Thyroid gland (tissue), 4 donors: ENCODE measurements at regions of chr19 and their contacts with region 1.

Region 1: DNA sequence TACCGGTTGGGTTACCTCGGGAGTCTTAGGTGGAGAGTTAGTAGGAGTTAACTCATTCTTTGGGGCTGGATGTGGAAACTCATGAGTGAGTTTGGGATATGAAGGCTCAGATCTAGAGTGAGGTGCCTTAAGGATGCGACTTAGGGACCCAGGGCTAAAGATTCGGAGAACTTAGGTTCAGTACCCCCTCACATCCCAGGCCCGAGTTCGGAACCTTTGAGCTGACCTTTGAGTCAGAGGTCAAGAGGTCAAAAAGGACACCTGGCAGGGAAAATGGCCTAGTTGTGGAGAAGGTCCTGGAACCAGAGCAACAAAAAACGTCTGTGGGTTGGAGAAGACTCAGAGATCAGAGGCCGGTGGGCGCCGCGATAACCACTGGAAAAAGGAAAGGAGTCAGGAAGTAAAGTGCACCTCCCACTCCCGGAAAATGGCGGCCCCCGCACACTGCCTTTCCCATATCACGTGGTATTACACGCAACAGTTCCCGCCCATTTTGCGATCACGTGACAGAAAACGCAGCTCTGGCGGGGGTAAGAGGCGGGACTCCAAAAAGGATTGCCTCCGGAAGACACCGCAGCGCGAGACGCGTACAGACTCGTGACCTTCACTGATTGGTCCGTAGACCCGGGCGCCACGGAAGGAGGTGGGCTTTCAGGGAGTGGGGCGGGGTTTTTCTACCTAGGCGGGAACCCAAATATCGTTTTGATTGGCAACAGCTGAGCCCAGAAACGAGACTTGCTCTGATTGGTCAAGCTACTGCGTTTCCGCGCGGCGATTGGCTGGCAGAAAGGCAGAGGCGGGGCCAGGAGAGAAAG is at the start of gene ACTMAP:
- DNase-seq: peak; percentile 99 to 100
- H3K4me3 ChIP-seq: peak within 1 kb of the TSS; percentile 45 to 62 (median 46)
- H3K27ac ChIP-seq: peak within 1 kb of the TSS; percentile 78 to 95 (median 86)
- H3K4me1 ChIP-seq: peaks cover 42 to 45% of the 10 kb centered on the region in 2 donors
- H3K27me3 ChIP-seq: no peaks in the 10 kb centered on the region
- CTCF ChIP-seq: peak in 2 of 6 experiments; percentile 13 to 20
- POLR2A ChIP-seq: peak; percentile 57 to 87
- total RNA-seq, gene ACTMAP: 3.3 to 8.5 (median 4.5) TPM

Region 2: DNA sequence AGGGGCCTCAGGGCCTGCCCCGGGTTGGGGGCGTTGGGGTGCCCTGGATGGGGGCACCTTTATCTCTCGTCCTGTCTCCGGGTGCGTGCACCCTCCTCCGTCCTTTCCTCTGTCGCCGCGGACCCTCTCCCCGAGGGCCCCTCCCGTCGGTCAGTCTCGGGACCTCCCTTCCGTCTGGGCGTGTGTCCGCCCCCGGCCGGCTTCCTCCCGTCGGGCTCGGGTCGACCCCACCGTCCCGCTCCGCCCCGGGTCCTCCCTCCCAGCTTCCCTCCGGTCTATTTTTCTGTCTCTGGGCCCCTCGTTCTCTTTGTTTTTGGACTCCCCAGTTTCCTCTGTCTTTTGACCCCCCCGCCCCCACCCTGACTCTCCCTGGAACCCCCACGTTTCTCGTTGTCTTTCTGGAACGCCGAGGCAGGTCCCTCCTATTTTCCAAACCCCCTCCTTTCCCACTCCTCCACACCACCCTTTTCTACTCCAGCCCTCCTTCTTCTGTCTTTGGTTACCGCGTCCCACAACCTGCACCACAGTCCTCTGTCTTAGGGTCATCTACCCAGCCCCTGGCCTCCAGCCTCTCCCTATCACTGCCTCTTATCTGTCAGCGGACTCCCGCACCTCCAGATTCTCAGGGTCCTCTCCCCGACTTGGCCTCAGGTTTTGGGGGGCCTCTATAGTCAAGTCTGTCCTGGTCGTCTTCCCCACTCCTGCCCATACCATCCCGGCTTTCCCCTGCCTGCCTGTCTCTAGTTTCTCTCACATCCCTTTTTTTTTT is 49.5 kb after region 1 on chr19:
- intact Hi-C with region 1: loop called (anchors 5 kb)
- DNase-seq: peak; percentile 48 to 52
- H3K4me3 ChIP-seq: peak overlapping the region; percentile 59 to 93 (median 78)
- H3K27ac ChIP-seq: peak overlapping the region; percentile 85 to 95 (median 94)
- H3K4me1 ChIP-seq: peaks cover 62 to 71% of the 10 kb centered on the region in 2 donors
- H3K27me3 ChIP-seq: no peaks in the 10 kb centered on the region
- CTCF ChIP-seq: no peak
- POLR2A ChIP-seq: no peak